Psoas muscle (tissue), 8 donors: ENCODE measurements at regions of chr5 and their contacts with region 1.

Region 1: GRCh38 chr5:102583276-102584124 is 84.7 kb upstream of the SLCO6A1 start:
- DNase-seq: no peak
- ATAC-seq: no peak
- H3K4me3 ChIP-seq: no peak overlapping the region
- H3K27ac ChIP-seq: no peak overlapping the region
- H3K4me1 ChIP-seq: no peaks in the 10 kb centered on the region
- H3K27me3 ChIP-seq: no peaks in the 10 kb centered on the region
- CTCF ChIP-seq: peak; percentile 46

Region 2: DNA sequence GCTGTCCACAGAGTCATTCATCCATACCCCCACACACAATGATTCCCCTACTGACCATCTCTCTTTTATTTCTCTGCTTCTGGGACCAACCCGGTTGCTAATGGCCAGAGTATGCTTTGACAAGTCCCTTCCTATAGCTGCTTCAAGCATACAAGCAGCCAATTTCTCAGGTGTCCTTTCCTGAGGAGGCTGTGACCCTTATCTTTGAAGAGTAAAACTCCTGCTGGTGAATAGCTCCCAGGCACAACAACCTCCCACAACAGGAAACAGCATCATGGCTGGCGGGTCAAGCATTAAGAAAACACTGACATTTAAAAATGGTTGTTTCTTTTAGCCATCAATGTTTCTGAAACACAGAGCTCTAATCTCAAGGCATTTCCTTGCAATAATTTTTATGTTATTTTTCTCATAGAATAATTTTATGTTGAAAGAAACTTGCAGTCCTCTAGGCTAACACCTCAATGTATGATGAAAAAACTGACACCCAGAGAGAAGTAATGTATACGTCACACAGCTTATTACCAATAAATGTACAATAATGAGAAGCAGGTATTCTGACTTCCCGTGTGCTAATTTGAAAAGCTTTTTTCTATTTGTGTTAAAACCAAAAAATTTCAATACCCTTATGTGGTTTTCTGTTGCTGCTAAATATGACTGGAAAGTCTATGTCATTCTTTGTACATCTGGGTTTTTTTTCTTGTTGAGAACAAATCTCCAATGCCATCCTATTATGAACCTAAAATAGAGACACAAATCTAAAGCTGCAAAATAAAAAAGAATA is 164.1 kb after region 1 on chr5:
- intact Hi-C with region 1: no loop called
- DNase-seq: no peak
- ATAC-seq: no peak
- H3K4me3 ChIP-seq: no peak overlapping the region
- H3K27ac ChIP-seq: no peak overlapping the region
- H3K4me1 ChIP-seq: peaks cover 14% of the 10 kb centered on the region
- H3K27me3 ChIP-seq: no peaks in the 10 kb centered on the region
- CTCF ChIP-seq: no peak

Region 3: DNA sequence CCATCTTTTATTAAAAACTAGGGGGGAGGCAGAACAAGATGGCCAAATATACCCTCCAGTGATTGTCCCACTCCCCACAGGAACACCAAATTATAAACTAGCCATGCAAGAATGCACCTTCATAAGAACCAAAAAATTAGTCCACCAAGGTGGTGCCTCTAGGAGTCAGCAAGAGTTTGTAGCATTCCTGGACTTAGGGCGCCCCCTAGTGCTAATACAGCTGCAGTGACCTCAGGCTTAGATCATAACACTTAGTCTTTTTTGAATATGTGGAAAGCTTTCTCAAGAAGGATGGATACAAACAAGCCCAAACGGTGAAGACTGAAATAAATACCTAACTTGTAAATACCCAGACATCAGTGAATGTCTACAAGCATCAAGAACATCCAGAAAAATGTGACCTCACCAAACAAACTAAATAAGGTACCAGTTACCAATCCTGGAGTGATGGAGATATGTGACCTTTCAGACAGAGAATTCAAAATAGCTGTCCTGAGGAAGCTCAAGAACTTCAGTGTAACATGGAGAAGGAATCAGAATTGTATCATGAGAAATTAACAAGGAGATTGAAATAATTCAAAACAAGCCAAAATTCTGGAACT is 555.9 kb after region 1 on chr5:
- intact Hi-C with region 1: loop called in 1 of 2 experiments (anchors 5 kb)
- DNase-seq: peak; percentile 53 to 75
- ATAC-seq: peak; percentile 76 to 92 (median 87)
- H3K4me3 ChIP-seq: no peak overlapping the region
- H3K27ac ChIP-seq: no peak overlapping the region
- H3K4me1 ChIP-seq: no peaks in the 10 kb centered on the region
- H3K27me3 ChIP-seq: no peaks in the 10 kb centered on the region
- CTCF ChIP-seq: peak; percentile 94